Heart right ventricle (tissue), 16 donors: ENCODE measurements at regions of chr13 and their contacts with region 1.

Region 1: DNA sequence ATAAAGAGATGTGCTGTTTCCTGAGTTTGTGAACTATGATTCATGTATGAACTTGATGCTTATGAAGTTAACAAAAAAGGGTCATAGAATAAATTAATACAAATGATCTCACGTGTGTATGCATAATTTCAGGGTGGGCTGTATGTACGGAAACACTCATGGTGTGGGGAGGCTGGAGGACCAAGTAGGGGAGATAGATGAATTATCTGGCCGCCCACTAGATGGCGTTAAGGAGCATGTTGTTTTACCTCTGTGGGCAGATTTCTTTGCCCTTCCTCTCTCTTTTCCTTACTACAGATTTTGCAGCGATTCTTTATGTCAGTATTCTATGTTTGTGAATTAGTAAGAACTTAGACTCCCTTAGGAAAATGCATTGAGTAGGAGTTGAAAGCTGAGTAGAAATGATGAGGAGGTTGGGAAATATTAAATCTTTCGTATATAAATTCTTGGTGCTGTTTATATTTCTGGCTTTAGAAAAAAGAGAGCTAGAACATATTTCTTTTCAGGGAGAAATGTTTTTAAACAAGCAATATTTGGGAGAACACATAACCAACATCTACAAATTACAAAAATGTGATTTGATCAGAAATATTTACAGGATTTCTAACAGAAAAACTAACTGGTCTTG is 47.4 kb upstream of the TMTC4 start:
- DNase-seq: peak in 1 of 2 donors; percentile 16
- ATAC-seq: peak in 1 of 8 donors; percentile 62
- H3K4me3 ChIP-seq: no peak overlapping the region
- H3K27ac ChIP-seq: no peak overlapping the region
- H3K4me1 ChIP-seq: no peaks in the 10 kb centered on the region
- H3K27me3 ChIP-seq: peaks cover 0 to 17% (median 6%) of the 10 kb centered on the region in 7 donors
- CTCF ChIP-seq: peak; percentile 20 to 75 (median 61)

Region 2: GRCh38 chr13:100646030-100646673 is 75.8 kb before region 1 on chr13:
- intact Hi-C with region 1: no loop called
- DNase-seq: no peak
- ATAC-seq: no peak
- H3K4me3 ChIP-seq: no peak overlapping the region
- H3K27ac ChIP-seq: no peak overlapping the region
- H3K4me1 ChIP-seq: no peaks in the 10 kb centered on the region
- H3K27me3 ChIP-seq: no peaks in the 10 kb centered on the region
- CTCF ChIP-seq: peak in 4 of 9 donors; percentile 20 to 41 (median 28)

Region 3: GRCh38 chr13:100987953-100988352 is 266.0 kb after region 1 on chr13:
- intact Hi-C with region 1: loop called in 1 of 10 experiments (anchors 5 kb)
- DNase-seq: no peak
- ATAC-seq: no peak
- H3K4me3 ChIP-seq: no peak overlapping the region
- H3K27ac ChIP-seq: no peak overlapping the region
- H3K4me1 ChIP-seq: no peaks in the 10 kb centered on the region
- H3K27me3 ChIP-seq: peaks cover 0 to 8% (median 0%) of the 10 kb centered on the region in 7 donors
- CTCF ChIP-seq: peak in 3 of 9 donors; percentile 9 to 22 (median 18)

Region 4: GRCh38 chr13:101098873-101099272 is 376.9 kb after region 1 on chr13:
- intact Hi-C with region 1: loop called in 6 of 10 experiments (anchors 2 to 10 kb)
- DNase-seq: no peak
- ATAC-seq: peak in 1 of 8 donors; percentile 48
- H3K4me3 ChIP-seq: no peak overlapping the region
- H3K27ac ChIP-seq: no peak overlapping the region
- H3K4me1 ChIP-seq: no peaks in the 10 kb centered on the region
- H3K27me3 ChIP-seq: no peaks in the 10 kb centered on the region
- CTCF ChIP-seq: no peak

Region 5: DNA sequence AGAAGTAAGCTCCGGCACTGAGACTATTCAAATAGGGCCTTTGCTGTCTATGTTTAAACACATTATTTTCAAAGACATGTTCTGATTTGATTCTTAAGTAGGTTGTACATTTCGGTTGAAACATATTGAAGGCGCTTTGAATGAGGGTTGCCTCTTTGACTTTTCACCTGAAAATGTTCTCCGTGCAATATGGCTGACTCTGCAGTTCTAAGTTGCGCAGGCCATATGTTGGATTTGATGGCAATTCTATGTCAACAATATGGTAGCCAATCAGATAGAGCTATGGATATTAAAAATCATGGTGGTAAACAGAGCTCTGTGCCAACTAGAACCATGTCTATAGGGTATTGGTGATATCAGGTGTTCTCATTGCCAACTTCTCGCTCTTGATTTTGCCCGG is 387.0 kb after region 1 on chr13:
- intact Hi-C with region 1: loop called in 4 of 10 experiments (anchors 5 to 10 kb)
- DNase-seq: no peak
- ATAC-seq: no peak
- H3K4me3 ChIP-seq: no peak overlapping the region
- H3K27ac ChIP-seq: no peak overlapping the region
- H3K4me1 ChIP-seq: peaks cover 0 to 4% (median 0%) of the 10 kb centered on the region in 9 donors
- H3K27me3 ChIP-seq: no peaks in the 10 kb centered on the region
- CTCF ChIP-seq: no peak

Region 6: GRCh38 chr13:101127741-101128353 is 405.8 kb after region 1 on chr13:
- intact Hi-C with region 1: loop called in 1 of 10 experiments (anchors 10 kb)
- DNase-seq: no peak
- ATAC-seq: no peak
- H3K4me3 ChIP-seq: no peak overlapping the region
- H3K27ac ChIP-seq: no peak overlapping the region
- H3K4me1 ChIP-seq: no peaks in the 10 kb centered on the region
- H3K27me3 ChIP-seq: no peaks in the 10 kb centered on the region
- CTCF ChIP-seq: peak; percentile 39 to 82 (median 70)